Prostate gland (tissue), 2 donors: ENCODE measurements at regions of chr18 and their contacts with region 1.

Region 1: DNA sequence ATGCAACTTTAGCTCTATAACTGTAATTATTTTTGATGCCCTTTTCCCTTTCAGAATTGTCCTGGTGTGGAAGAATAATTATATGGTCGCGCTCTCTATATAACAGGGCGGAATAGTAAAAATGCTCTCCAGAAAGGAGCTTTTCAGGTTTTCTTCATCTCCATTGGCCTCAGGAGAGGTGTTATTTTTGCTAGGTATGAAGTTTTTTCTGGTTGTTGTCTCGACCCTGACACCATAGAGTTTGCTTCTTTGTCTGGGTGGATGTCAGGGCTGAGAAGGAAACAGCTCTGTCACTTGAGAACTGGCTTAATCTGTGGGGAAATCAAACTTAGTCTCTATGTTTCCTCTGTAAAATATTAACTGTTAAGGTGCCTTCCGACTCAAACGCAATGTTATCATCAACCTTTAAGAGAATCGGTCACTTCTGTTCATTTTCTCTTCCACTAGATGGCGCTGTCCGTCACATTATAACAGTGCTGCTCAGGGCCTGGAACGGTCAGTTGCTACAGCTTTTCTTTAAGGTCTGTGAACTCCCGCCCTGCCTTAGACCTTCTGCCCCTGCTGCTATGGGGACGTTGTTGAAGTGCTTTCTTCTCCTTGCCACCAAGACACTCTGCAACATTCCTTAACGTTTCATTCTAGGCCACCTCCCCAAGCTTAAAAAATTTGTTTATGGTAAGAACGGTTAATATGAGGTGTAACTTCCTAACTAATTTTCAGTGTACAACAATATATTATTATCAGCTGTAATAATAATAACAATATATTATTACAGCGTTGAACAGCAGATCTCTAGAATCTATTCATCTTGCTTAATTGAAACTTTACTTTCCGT is 23.8 kb upstream of the SERPINB12 start:
- DNase-seq: peak; percentile 70
- H3K4me3 ChIP-seq: no peak overlapping the region
- H3K27ac ChIP-seq: no peak overlapping the region
- H3K4me1 ChIP-seq: no peaks in the 10 kb centered on the region
- H3K27me3 ChIP-seq: no peaks in the 10 kb centered on the region
- CTCF ChIP-seq: peak; percentile 36 to 90 (median 84)
- POLR2A ChIP-seq: no peak

Region 2: GRCh38 chr18:63848159-63848558 is 329.8 kb after region 1 on chr18:
- intact Hi-C with region 1: loop called (anchors 2 kb)
- DNase-seq: peak; percentile 60
- H3K4me3 ChIP-seq: no peak overlapping the region
- H3K27ac ChIP-seq: no peak overlapping the region
- H3K4me1 ChIP-seq: no peaks in the 10 kb centered on the region
- H3K27me3 ChIP-seq: no peaks in the 10 kb centered on the region
- CTCF ChIP-seq: peak in 3 of 4 experiments; percentile 49 to 78 (median 74)
- POLR2A ChIP-seq: no peak